ENCODE measurements at regions of chr2 and their contacts with region 1.

Region 1: DNA sequence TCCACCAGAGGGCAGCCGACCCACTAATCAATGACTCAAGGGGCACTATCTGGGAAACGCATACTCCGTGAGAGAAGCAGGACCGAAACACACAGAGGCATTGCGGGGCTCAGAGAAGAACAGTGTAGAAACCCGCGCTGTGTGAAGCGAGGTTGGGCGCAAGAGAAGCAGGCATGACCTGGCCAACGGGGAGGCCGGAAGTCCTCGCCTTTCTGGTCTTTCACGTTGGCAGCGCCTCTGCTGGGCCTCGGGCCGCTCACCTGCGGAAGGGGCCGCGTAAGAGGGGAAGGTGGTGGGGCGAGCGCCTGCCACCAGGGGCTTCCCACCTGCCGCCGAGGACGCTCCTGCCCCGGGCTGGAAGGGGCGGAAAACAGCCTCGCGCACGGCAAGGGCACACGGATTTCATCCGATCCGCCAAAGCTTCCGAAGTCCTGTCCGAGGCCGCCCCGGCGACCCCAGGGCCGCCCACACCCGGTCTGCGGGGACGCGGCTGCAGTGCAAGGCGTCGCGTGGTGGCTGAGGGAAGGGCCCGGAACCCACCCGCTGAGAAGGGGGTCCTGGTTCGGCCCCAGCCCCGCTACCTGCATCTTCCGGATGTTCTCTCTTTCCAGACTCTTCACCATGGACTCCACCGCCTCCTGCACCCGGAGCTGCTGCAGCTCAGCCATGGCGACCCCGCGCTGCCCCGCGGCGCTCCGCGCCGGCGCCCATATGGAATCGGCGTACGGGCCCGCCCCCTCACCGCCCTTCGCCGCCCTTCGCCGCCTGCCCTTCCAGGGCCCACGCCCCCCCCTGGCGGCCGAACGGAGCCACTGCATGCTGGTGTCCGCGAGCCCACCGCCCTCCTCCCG is at the start of gene FAM136A:
- DNase-seq: peak; percentile 90

Region 2: DNA sequence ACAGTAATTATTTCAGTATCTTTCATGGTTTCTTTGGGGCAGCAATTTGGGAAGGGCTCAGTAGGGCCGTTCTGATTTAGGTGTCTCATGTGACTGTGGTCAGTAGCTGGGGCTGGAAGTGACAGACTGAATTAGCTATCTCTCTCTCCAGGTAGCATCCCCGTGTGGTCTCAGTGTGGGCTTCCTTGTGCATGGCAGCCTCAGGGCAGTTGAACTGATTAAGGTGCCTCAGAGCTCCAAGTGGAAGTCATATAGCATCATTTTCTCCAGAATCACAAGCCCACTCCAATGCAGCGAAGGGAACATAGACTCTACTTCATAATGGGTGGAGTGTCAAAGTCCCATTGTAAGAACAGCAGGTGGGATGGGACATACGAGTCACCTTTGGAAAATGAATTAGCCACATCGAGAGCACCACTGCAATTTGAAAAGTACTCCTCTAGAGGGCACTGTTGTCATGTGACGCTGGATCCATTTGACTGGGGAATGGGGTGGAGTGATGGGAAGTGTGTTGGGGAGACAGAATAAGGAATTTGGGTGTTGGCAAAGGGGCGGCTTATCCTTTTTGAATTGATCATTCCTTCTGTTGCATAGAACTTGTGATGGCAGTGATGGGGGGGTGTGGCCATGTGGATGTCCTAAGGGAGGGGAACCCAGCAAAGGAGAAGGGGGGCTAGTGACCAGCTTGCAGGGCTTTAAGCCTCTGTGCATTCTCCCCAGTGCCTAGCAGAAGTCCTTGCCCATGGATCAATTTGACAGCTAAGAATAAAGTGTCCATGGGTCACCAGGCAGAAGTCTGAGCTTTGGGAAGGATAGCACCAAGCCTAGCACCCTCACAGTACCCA is 39.6 kb after region 1 on chr2:
- CTCF ChIA-PET with region 1: interaction called, 10 read pairs
- POLR2A ChIA-PET with region 1: no interaction called
- DNase-seq: peak; percentile 78

Region 3: GRCh38 chr2:70460333-70460732 is 158.8 kb after region 1 on chr2:
- CTCF ChIA-PET with region 1: no interaction called
- POLR2A ChIA-PET with region 1: no interaction called
- DNase-seq: no peak

Region 4: DNA sequence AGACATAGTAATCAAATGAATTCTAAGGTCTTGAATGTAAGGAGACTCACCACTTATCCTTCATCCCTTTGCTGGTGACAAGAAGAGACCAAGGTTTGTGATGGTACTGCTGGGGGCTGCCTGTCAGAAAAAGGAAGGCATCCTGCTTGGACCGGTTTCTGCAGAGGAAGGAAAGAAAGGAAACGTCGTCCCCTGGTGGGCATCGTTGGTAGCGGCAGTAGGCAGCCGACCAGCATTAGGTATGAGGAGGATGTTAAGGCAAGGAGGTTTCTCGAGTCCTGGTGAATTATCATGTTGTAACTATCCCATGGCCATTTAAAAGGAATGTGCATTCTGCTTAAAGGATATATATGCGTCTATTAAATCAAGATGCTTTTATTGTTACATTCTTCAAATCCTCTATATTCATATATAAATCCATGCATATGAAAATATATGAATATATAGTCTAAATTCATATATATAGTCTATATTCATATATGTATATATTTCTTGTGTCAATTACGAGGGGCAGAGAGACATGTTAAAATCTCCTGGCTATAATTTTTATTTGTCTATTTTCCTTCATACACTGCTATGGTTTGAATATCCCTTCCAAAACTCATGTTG is 346.4 kb after region 1 on chr2:
- CTCF ChIA-PET with region 1: interaction called, 50 read pairs
- POLR2A ChIA-PET with region 1: interaction called, 3 read pairs
- DNase-seq: peak; percentile 72

Measured in HEK293T (cell line).